B cell (primary cell): ENCODE measurements at regions of chr2 and their contacts with region 1.

Region 1: GRCh38 chr2:134198006-134198634 is 55.8 kb upstream of the MGAT5 start:
- DNase-seq: no peak
- ATAC-seq: no peak
- H3K4me3 ChIP-seq: no peak overlapping the region
- H3K4me3 Mint-ChIP-seq: peak overlapping the region; percentile 66
- H3K27ac ChIP-seq: peak overlapping the region; percentile 23 to 59
- H3K27ac Mint-ChIP-seq: peak overlapping the region; percentile 62
- H3K4me1 ChIP-seq: peaks cover 56 to 57% of the 10 kb centered on the region in 2 donors
- H3K4me1 Mint-ChIP-seq: peaks cover 82% of the 10 kb centered on the region
- H3K27me3 ChIP-seq: no peaks in the 10 kb centered on the region
- H3K27me3 Mint-ChIP-seq: no peaks in the 10 kb centered on the region
- CTCF ChIP-seq: no peak

Region 2: GRCh38 chr2:134154246-134154645 is 43.9 kb before region 1 on chr2:
- CTCF ChIA-PET with region 1: interaction called, 3 read pairs
- POLR2A ChIA-PET with region 1: no interaction called
- intact Hi-C with region 1: loop called (anchors 5 kb)
- DNase-seq: peak; percentile 77
- ATAC-seq: peak; percentile 68
- H3K4me3 ChIP-seq: no peak overlapping the region
- H3K4me3 Mint-ChIP-seq: peak overlapping the region; percentile 57
- H3K27ac ChIP-seq: peak overlapping the region in 1 of 2 donors; percentile 84
- H3K27ac Mint-ChIP-seq: peak overlapping the region; percentile 85
- H3K4me1 ChIP-seq: peaks cover 43 to 60% of the 10 kb centered on the region in 2 donors
- H3K4me1 Mint-ChIP-seq: peaks cover 81% of the 10 kb centered on the region
- H3K27me3 ChIP-seq: no peaks in the 10 kb centered on the region
- H3K27me3 Mint-ChIP-seq: no peaks in the 10 kb centered on the region
- CTCF ChIP-seq: no peak

Region 3: GRCh38 chr2:134181210-134181609 is 16.9 kb before region 1 on chr2:
- CTCF ChIA-PET with region 1: interaction called, 12 read pairs
- POLR2A ChIA-PET with region 1: no interaction called
- intact Hi-C with region 1: no loop called
- DNase-seq: peak; percentile 69
- ATAC-seq: peak; percentile 85
- H3K4me3 ChIP-seq: no peak overlapping the region
- H3K4me3 Mint-ChIP-seq: peak overlapping the region; percentile 76
- H3K27ac ChIP-seq: peak overlapping the region; percentile 63 to 81
- H3K27ac Mint-ChIP-seq: peak overlapping the region; percentile 95
- H3K4me1 ChIP-seq: peaks cover 84 to 93% of the 10 kb centered on the region in 2 donors
- H3K4me1 Mint-ChIP-seq: peaks cover 91% of the 10 kb centered on the region
- H3K27me3 ChIP-seq: no peaks in the 10 kb centered on the region
- H3K27me3 Mint-ChIP-seq: no peaks in the 10 kb centered on the region
- CTCF ChIP-seq: peak; percentile 28

Region 4: DNA sequence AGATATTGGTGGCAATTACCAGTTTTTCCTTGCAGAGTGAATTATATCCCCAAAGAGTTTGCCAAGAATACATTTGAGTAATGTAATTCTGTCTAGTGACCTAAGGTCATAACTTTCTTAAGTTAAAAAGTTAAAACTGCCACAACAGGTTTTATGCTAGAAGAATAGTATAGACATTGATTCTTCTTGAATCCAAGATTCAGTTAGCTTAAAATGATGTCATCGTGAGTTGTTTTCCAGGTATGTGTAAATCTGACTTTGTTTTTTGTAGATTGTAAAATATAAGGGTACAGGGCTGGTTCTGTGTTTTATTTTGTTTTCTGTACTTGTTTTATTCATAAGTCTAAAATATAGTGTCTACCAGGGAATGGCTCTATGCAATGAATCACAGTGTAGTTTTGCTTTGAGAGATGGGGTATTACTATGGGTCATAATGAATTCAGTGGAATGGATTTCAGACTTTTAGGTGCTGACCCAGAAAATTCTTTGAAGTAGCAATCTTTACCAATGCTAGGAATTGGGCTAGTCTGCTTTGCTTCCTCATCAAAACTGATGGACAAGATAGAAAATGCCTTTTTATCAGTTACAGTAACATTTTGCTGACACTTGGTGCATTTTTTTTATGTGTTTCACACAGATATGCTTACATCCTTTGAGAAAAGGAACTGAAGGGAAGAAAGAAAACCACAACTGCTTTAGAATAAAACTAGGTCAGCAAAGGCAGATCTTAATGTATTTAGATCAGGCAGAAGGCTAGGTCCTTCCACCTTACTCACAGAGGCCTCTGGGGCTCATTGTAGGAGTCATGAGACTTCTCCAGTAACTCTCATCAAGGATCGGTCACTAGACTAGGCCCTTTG is 35.0 kb after region 1 on chr2:
- CTCF ChIA-PET with region 1: no interaction called
- POLR2A ChIA-PET with region 1: no interaction called
- intact Hi-C with region 1: loop called (anchors 5 kb)
- DNase-seq: peak; percentile 63
- ATAC-seq: peak; percentile 31
- H3K4me3 ChIP-seq: peak overlapping the region in 3 of 5 experiments; percentile 7 to 48 (median 30)
- H3K4me3 Mint-ChIP-seq: peak overlapping the region; percentile 55
- H3K27ac ChIP-seq: peak overlapping the region; percentile 63 to 79
- H3K27ac Mint-ChIP-seq: peak overlapping the region; percentile 87
- H3K4me1 ChIP-seq: peaks cover 76% of the 10 kb centered on the region in 2 donors
- H3K4me1 Mint-ChIP-seq: peaks cover 88% of the 10 kb centered on the region
- H3K27me3 ChIP-seq: no peaks in the 10 kb centered on the region
- H3K27me3 Mint-ChIP-seq: no peaks in the 10 kb centered on the region
- CTCF ChIP-seq: no peak